ENCODE measurements at regions of chr5 and their contacts with region 1.

Region 1: GRCh38 chr5:98928873-98929696 is at the start of gene CHD1:
- H3K4me3 ChIP-seq: peak within 1 kb of the TSS; percentile 99
- H3K27ac ChIP-seq: peak within 1 kb of the TSS; percentile 98
- H3K4me1 ChIP-seq: 0 out of 2 replicates have a peak, but pooled peaks cover 4% of the 10 kb centered on the region
- CTCF ChIP-seq: no peak

Region 2: GRCh38 chr5:98804066-98804465 is 125.0 kb before region 1 on chr5:
- CTCF ChIA-PET with region 1: no interaction called
- POLR2A ChIA-PET with region 1: no interaction called
- H3K4me3 ChIP-seq: no peak overlapping the region
- H3K27ac ChIP-seq: no peak overlapping the region
- H3K4me1 ChIP-seq: no peaks in the 10 kb centered on the region
- CTCF ChIP-seq: no peak

Region 3: GRCh38 chr5:98940581-98940980 is 11.5 kb after region 1 on chr5:
- CTCF ChIA-PET with region 1: no interaction called
- POLR2A ChIA-PET with region 1: interaction called, 14 read pairs
- H3K4me3 ChIP-seq: no peak overlapping the region
- H3K27ac ChIP-seq: no peak overlapping the region
- H3K4me1 ChIP-seq: peaks cover 2% of the 10 kb centered on the region
- CTCF ChIP-seq: no peak

Region 4: DNA sequence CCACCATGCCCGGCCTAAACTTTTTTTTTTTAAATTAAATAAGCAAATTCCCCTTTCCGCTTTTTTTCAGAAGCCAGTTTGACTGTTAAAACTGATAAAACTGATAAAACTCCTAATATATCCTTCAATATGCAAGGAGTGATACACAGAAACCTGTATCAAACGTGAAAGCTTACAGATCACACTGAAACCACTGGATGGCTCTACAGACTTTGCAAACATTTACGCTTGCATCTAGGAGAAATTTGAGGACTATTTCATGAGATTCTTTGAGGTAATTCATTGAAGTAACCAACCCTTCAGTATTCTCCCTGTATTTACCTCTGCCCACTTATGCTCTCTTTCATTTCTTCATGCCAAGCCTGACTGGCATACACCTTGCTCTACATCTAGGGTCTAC is 40.3 kb after region 1 on chr5:
- CTCF ChIA-PET with region 1: no interaction called
- POLR2A ChIA-PET with region 1: no interaction called
- H3K4me3 ChIP-seq: no peak overlapping the region
- H3K27ac ChIP-seq: no peak overlapping the region
- H3K4me1 ChIP-seq: no peaks in the 10 kb centered on the region
- CTCF ChIP-seq: no peak

Region 5: DNA sequence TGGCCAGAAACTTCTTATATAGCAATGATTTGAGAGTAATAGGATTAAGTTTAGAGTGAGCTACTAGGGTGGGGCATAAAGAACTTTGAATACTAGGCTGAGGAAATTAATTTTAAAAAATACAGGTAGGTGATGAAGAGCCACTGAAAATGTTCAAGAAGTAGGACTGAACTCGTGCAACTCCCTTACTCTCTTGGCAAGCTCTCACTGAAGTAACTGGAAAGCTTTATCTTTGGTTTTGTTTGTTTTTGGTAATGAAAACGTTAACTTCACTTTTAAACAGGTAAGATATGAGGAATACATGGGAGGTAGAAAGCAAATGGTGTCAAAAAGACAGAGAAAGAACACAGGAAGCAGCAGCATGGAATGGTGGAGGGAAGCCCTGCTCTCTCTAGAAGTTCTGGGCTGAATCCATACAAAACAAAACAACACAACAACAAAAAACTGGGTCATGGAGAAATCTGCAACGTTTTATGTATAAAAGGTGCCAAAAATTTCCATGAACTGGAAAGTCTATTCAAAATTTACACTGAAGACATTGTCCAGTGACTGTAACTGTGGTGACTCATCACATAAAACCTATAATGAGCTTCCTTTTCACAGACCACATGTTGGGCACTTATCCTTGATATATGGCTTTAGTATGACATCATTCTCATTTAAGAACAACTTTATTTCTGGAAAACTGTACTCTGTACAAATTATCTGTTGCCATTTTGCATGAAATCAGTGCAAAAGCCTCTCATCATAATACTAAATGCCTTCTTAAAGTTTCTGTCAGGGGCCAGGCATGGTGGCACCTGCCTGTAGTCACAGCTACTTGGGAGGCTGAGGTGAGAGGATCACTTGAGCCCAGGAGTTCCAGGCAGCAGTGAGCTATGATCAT is 91.0 kb after region 1 on chr5:
- CTCF ChIA-PET with region 1: no interaction called
- POLR2A ChIA-PET with region 1: interaction called, 16 read pairs
- H3K4me3 ChIP-seq: no peak overlapping the region
- H3K27ac ChIP-seq: peak overlapping the region; percentile 54
- H3K4me1 ChIP-seq: peaks cover 12% of the 10 kb centered on the region
- CTCF ChIP-seq: no peak

Measured in HEK293 (cell line).